Cardiac septum (tissue), 1 donor: ENCODE measurements at regions of chr6 and their contacts with region 1.

Region 1: GRCh38 chr6:157274471-157275226 is 48.7 kb downstream of the TMEM242 start:
- DNase-seq: peak; percentile 92

Region 2: GRCh38 chr6:157045831-157046454 is 228.7 kb before region 1 on chr6:
- intact Hi-C with region 1: loop called (anchors 10 kb)
- DNase-seq: no peak

Region 3: DNA sequence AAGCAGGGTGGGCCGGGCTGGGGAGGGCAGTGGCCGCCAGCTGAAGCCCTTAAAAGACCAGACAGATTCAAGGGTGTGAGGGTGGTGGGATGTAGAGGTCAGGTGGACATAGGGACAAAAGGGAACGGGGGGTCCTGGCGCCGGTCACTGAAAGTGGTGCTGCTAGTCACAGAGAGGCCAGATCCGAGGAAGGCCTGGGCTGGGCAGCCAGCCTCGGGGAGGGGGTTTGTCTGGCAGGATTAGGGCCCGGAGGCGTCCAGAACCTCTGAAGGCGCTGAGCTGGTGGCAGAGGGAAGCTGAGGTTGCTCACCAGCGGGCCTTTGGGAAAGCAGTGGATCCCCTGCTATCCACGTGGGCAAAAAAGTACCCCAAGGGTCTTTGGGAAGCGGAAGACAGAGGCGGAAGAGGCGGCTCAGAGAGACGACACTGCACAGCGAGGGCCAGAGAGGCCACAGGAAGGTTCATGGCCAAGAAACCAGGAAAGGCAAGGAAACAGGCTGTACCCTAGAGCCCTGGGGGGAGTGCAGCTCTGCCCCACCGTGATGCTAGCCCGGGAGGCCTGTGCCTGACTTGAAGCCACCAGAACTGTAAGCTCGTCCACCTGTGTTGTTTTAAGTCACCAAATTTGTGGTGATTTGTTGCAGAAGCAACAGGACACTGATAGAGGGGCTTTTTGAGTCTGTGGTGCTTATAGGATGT is 57.3 kb before region 1 on chr6:
- intact Hi-C with region 1: no loop called
- DNase-seq: peak; percentile 70

Region 4: DNA sequence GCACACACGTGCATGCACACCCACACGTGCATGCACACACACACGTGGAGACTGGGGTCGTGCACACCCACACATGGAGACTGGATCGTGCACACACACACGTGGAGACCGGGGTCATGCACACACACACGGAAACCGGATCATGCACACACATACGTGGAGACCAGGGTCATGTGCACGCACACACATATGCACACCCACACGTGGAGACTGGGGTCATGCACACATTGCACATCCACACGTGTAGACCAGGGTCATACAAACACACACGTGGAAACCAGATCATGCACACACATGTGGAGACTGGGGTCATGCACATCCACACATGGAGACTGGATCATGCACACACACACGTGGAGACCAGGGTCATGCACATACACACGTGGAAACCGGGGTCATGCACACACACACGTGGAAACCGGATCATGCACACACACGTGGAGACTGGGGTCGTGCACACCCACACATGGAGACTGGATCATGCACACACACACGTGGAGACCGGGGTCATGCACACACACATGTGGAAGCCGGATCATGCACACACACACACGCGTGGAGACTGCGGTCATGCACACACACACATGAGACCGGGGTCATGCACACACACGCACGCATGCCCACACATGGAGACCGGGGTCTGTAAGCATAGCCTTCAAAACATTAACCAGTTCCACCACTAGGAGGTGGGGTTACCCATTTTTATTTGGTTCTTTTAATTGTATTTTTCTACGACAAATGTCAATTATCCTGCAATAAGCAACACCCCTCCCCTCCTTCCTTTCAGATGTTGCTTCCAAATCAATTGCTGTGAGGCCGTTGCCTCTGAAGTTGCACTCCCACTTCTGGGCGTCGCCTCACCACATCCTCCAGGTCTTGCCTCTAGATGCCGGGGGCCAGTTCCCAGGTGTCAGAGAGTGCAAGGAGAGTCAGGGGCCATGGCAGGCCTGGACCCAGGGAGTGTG is 47.2 kb before region 1 on chr6:
- intact Hi-C with region 1: loop called (anchors 2 kb)
- DNase-seq: no peak

Region 5: GRCh38 chr6:157258878-157259277 is 15.8 kb before region 1 on chr6:
- intact Hi-C with region 1: no loop called
- DNase-seq: no peak